PC-9 (cell line): ENCODE measurements at regions of chr13 and their contacts with region 1.

Region 1: DNA sequence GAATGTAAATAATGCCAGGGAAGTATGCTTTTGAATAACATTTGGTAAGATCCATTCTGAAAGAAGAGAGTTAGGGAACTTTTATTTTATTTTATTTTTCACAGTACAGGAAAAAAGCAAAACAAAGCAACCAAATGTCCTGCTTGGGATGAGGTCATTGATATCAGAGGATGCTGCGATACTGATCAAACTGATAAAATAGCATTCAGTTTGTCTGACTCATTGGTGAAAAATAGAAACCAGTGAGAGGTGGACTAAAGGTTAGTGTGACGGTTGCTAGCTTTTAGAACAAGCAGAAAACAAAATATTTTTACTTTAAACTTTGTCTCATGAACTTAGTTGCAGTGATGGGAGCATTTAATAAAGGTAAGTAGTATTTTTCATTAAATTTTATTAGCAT is 37.2 kb downstream of the ITGBL1 start:
- DNase-seq: peak in 1 of 2 experiments; percentile 92
- H3K4me3 ChIP-seq: peak overlapping the region; percentile 48; the same call in 1 of the 2 replicates
- H3K27ac ChIP-seq: peak overlapping the region; percentile 98
- H3K4me1 ChIP-seq: peaks cover 65% of the 10 kb centered on the region
- H3K27me3 ChIP-seq: no peaks in the 10 kb centered on the region
- CTCF ChIP-seq: no peak

Region 2: DNA sequence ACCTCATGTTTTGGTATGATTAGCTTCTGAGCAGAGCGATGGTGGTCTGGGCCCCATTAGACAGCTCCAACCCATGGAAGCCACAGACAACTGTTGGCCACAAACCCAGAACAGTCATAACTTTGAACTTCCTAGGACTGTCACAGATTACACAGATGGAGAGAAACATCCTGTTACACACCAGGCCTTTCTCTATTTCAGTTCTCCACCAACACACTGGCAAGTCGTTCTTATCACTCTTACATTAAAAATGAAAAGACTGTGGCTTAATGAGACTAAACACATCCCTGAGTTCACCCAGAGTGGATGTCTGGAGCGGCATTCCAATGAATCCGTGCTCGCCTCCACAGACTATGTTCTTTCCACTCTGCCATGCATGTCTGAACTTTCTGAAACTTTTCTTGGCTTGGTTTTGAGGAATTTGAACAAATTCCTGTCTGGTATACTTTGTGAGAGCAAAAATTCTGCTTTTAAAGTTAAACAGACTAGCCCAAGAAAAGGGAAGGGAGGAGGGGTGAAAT is 182.4 kb before region 1 on chr13:
- CTCF ChIA-PET with region 1: no interaction called
- POLR2A ChIA-PET with region 1: no interaction called
- intact Hi-C with region 1: loop called (anchors 1 kb)
- DNase-seq: no peak
- H3K4me3 ChIP-seq: no peak overlapping the region
- H3K27ac ChIP-seq: no peak overlapping the region
- H3K4me1 ChIP-seq: peaks cover 12% of the 10 kb centered on the region; the same call in 1 of the 2 replicates
- H3K27me3 ChIP-seq: no peaks in the 10 kb centered on the region
- CTCF ChIP-seq: no peak

Region 3: DNA sequence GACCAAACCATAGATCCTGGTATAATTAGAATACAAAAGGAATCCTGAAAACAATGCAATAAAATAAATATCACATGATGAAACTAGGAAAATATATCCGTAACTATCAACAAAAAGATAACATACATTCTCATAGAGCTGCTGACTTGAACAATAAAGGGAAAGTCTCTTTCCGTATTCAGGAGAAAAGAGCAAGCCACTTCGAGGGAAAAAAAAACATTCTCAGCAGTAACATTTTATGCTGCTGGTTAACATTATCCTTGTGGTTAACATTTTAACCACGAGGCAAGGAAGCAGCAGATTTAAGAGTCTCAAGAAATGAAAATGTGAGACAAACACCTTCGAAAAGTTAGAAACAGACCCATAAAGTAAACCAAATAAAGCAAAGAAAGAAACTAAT is 99.2 kb before region 1 on chr13:
- CTCF ChIA-PET with region 1: no interaction called
- POLR2A ChIA-PET with region 1: no interaction called
- intact Hi-C with region 1: no loop called
- DNase-seq: no peak
- H3K4me3 ChIP-seq: no peak overlapping the region
- H3K27ac ChIP-seq: no peak overlapping the region
- H3K4me1 ChIP-seq: no peaks in the 10 kb centered on the region
- H3K27me3 ChIP-seq: no peaks in the 10 kb centered on the region
- CTCF ChIP-seq: no peak

Region 4: GRCh38 chr13:102277286-102277685 is 787.7 kb after region 1 on chr13:
- CTCF ChIA-PET with region 1: no interaction called
- POLR2A ChIA-PET with region 1: no interaction called
- intact Hi-C with region 1: no loop called
- DNase-seq: no peak
- H3K4me3 ChIP-seq: no peak overlapping the region
- H3K27ac ChIP-seq: no peak overlapping the region
- H3K4me1 ChIP-seq: no peaks in the 10 kb centered on the region
- H3K27me3 ChIP-seq: 0 out of 2 replicates have a peak, but pooled peaks cover 3% of the 10 kb centered on the region
- CTCF ChIP-seq: no peak